Posterior vena cava (tissue), 2 donors: ENCODE measurements at regions of chr2 and their contacts with region 1.

Region 1: DNA sequence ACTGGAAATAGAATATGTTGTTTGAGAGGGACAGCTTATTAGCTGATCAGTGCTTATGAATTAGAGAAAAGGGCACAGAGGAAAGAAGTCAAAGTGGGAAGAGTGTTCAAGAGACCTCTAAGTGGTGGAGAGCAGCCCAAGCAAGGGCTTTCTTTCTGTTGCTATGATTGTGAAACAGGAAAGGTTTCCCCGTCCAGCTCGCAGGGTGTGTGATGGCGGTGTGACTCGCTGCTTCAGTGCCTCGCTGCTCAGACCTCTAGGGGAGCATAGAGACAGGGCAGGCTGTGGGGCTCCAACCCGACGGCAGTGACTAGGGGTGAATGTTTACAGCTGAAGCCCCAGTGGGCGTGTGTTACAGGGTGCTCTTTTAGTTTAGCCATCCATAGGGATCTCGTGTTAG is 166.5 kb upstream of the COPS8 start:
- DNase-seq: no peak

Region 2: DNA sequence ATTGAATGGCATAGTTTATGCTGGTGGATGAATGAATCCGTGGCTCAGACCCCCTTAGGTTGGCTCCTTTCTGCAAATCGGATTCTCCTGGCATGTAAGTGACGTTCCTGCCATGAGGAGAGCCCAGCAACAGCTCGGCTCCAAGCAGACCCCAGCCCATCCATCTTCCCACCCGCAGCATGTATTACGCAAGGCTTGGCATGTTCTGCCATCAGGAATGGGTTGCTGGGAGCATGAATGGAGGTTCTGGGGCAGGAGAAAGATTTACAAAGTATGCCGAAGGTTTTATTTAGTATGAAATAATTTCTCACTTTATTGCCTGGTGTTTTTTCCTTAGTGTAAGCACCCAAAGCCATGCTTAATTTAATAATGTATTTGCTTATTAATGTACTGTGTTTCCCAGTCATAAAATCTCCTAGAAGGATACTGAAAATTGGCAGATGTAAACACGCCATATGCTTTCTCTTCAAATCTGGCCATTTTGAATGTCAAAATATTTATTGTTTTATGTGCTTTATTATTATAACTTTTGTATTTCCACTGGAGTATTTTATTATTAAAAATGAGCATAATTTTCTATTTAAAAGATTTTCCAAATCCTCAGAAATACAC is 221.1 kb before region 1 on chr2:
- intact Hi-C with region 1: loop called in 1 of 2 experiments (anchors 2 kb)
- DNase-seq: no peak

Region 3: DNA sequence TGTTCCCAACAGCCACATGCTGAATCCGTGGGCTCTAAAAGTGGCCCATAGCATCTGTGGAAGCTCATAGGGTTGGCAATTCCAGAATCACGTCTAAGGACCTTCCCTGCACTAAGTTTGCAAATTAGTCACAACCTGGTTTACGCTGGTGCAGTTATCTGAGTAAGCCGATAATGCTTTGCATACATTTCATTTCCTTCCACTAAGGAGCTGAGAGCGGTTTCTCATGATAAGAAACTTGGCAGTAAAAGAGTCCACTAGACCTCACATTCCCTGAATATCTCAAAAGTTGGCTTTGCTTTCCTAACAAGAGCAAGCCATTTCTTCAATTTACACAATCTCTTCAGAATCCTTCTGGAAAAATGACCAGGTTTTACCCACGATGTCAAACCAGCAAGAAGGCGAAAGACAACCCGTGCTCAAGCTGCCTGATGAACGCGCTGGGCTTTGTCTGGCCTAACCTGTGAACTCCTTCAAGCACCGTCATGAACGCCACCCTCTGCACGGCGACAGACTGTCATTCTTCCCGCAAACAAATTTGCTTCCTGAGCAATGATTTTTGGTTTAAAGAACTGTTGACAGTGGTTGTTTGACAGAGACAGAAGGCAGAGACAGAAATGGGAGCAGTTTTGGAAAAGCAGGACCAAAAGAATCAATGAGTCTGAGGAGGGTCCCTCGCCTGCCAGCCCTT is 93.5 kb after region 1 on chr2:
- intact Hi-C with region 1: loop called in 1 of 2 experiments (anchors 1 kb)
- DNase-seq: no peak

Region 4: DNA sequence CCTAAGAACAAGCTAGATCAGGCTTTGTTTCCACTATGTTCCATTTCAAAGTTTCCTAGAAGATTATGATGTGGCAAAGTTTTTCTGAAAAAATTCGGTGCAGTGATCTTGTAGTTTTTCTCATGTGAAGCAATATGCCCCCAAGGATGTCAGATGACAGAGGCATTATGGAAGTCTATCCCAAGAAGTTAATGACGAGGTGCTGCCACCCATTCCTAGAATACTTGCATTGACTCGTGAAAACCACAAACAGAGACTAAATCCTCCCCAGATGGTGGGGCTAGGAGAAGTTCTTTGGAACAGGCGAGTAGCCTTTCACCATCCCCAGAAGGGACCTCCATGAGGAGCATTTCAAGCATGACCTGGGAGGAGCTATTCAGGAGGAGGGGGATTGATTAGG is 126.2 kb after region 1 on chr2:
- intact Hi-C with region 1: no loop called
- DNase-seq: no peak

Region 5: DNA sequence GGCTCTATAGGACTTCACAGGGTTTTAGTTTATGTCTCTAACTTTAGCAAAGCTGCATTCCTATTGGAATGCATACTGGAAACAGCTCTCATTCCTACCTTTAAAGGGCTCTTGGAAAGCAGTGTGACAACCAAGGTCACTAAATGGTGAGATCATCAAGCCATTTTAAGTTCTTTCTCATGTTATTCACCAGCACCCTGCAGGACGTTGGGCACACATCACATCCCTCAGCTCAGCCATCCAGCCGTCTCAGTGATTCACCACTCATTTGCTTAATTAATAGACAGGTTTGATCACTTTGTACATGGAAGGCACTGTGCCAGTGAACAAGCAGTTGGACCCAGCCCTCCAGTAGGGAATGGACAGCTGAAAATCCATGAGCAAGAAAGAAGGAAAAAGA is 847.1 kb after region 1 on chr2:
- intact Hi-C with region 1: no loop called
- DNase-seq: peak; percentile 60